ENCODE measurements at regions of chr3 and their contacts with region 1.

Region 1: DNA sequence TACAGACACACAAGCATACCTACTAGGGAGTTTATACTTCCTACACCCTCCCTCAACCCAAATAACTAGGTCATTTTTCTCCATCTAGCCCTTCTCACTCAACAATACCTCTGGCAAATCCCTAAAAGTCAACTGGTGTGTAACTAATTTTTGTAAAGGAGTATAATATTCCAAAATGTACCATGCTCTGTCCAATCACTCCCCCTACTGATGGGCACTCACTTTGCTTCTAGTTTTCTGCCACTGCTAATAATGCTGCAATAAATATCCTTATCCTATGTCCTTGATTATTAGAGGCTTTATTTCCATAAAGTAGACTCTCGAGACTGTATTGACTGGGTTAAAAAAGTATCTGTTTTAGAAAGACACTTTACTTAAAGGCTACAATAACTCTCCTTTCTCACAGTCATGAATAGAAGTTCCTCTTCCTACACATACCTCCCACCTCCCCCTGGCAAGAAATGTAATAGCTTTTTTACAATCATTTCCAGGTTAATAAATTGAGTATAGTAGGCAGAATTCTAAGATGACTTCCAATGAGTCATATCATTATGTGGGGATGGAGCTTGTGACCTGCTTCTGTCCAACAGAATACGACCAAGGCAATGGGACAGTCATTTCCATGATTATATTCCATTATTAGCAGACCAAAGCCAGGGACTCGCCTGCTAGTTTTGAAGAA is 30.0 kb downstream of the SHQ1 start:
- DNase-seq: no peak
- H3K4me3 Mint-ChIP-seq: no peak overlapping the region
- H3K27ac Mint-ChIP-seq: peak overlapping the region; percentile 18
- H3K4me1 Mint-ChIP-seq: peaks cover 22% of the 10 kb centered on the region
- H3K27me3 Mint-ChIP-seq: no peaks in the 10 kb centered on the region

Region 2: GRCh38 chr3:71725279-71725991 is 1092.8 kb before region 1 on chr3 and contains the start of gene EIF4E3:
- intact Hi-C with region 1: loop called (anchors 1 kb)
- DNase-seq: peak; percentile 84
- H3K4me3 Mint-ChIP-seq: peak within 1 kb of the TSS; percentile 96
- H3K27ac Mint-ChIP-seq: peak within 1 kb of the TSS; percentile 94
- H3K4me1 Mint-ChIP-seq: peaks cover 71% of the 10 kb centered on the region
- H3K27me3 Mint-ChIP-seq: no peaks in the 10 kb centered on the region
- total RNA-seq, gene EIF4E3: 20.3 and 20.7 TPM in 2 replicates

Region 3: DNA sequence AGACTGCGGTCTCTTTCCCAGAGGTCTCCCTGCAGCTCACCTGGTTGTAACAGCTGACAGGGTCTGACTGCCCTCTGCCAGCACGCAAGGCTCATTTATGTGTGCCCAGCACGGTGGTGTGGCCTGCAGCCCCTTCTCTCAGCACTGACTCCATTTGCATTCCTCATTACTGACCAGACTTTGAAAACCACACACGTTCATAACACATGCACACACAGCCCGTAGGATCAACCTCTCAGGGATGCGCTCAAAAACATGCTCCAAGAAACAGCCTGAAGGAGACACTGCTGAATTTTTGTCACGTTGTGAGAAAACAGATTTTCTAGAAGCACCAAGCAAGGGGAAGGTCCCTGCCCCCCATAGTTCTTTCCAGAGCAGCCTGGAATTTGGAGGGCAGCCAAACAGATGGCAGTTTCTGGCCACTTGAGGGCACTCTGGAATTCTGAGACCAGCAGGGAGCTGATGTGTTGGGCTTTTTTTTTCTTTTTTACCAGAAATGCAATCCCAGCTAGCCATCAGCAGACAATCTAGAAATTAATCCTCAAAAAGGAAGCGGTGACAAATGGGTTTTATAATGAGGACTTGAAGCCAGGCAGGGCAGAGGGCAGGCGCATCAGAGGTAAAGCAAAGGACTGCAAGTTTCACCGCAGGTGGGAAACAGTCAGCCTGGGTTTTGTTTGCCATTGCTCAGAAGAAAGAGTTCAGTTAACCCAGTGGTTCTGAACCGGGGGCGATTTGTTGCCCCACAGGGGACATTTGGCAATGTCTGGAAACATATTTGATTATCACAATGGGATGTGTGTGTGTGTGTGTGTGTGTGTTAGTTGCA is 862.8 kb before region 1 on chr3:
- intact Hi-C with region 1: loop called (anchors 10 kb)
- DNase-seq: peak; percentile 65
- H3K4me3 Mint-ChIP-seq: no peak overlapping the region
- H3K27ac Mint-ChIP-seq: peak overlapping the region; percentile 39
- H3K4me1 Mint-ChIP-seq: peaks cover 31% of the 10 kb centered on the region
- H3K27me3 Mint-ChIP-seq: no peaks in the 10 kb centered on the region

Region 4: GRCh38 chr3:72339116-72340030 is 478.9 kb before region 1 on chr3:
- intact Hi-C with region 1: loop called (anchors 1 kb)
- DNase-seq: no peak
- H3K4me3 Mint-ChIP-seq: no peak overlapping the region
- H3K27ac Mint-ChIP-seq: no peak overlapping the region
- H3K4me1 Mint-ChIP-seq: peaks cover 32% of the 10 kb centered on the region
- H3K27me3 Mint-ChIP-seq: no peaks in the 10 kb centered on the region

Region 5: GRCh38 chr3:72447059-72447946 is 370.9 kb before region 1 on chr3:
- intact Hi-C with region 1: loop called (anchors 2 kb)
- DNase-seq: peak; percentile 99
- H3K4me3 Mint-ChIP-seq: peak overlapping the region; percentile 92
- H3K27ac Mint-ChIP-seq: peak overlapping the region; percentile 86
- H3K4me1 Mint-ChIP-seq: peaks cover 46% of the 10 kb centered on the region
- H3K27me3 Mint-ChIP-seq: peaks cover 4% of the 10 kb centered on the region

Region 6: GRCh38 chr3:72629191-72629631 is 189.0 kb before region 1 on chr3:
- intact Hi-C with region 1: loop called (anchors 2 kb)
- DNase-seq: peak; percentile 60
- H3K4me3 Mint-ChIP-seq: peak overlapping the region; percentile 37
- H3K27ac Mint-ChIP-seq: peak overlapping the region; percentile 78
- H3K4me1 Mint-ChIP-seq: peaks cover 48% of the 10 kb centered on the region
- H3K27me3 Mint-ChIP-seq: no peaks in the 10 kb centered on the region

Region 7: DNA sequence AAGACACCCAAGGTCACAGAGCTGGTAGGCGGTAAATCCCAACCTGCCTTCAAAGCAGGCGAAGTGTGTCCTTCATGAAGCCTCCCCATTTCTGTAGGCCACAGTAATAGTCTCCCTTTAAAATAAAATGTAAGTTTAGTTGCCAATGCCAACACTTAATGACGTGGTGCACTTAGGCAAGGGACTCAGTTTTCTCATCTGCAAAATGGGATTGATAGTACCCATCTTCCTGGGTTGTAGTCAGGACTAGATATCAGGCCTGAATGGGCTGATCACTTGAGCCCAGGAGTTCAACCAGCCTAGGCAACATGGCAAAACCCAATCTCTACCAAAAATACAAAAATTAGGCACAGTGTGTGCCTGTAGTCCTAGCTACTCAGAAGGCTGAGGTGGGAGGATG is 84.6 kb before region 1 on chr3:
- intact Hi-C with region 1: no loop called
- DNase-seq: no peak
- H3K4me3 Mint-ChIP-seq: no peak overlapping the region
- H3K27ac Mint-ChIP-seq: no peak overlapping the region
- H3K4me1 Mint-ChIP-seq: peaks cover 4% of the 10 kb centered on the region
- H3K27me3 Mint-ChIP-seq: no peaks in the 10 kb centered on the region

Region 8: DNA sequence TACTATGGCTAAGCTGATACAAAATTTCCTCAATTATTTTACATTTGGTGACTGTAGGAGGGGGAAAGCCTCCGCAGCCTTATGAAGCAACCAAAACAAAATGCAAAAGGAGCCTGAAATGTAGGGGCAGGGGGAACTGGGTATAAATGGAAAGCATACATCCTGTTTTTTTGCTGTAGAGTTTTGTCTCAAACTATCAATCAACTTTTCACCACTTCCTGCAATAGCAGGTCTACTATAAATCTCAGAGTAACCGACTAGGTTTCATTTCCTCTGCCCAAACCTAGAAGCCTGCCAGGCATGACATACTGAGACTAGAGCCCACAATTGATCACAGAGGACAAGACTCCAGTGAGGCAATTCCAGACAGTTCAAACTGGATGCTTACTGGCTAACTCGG is 61.3 kb before region 1 on chr3:
- intact Hi-C with region 1: loop called (anchors 5 kb)
- DNase-seq: peak; percentile 87
- H3K4me3 Mint-ChIP-seq: peak overlapping the region; percentile 60
- H3K27ac Mint-ChIP-seq: peak overlapping the region; percentile 81
- H3K4me1 Mint-ChIP-seq: peaks cover 39% of the 10 kb centered on the region
- H3K27me3 Mint-ChIP-seq: no peaks in the 10 kb centered on the region

Region 9: DNA sequence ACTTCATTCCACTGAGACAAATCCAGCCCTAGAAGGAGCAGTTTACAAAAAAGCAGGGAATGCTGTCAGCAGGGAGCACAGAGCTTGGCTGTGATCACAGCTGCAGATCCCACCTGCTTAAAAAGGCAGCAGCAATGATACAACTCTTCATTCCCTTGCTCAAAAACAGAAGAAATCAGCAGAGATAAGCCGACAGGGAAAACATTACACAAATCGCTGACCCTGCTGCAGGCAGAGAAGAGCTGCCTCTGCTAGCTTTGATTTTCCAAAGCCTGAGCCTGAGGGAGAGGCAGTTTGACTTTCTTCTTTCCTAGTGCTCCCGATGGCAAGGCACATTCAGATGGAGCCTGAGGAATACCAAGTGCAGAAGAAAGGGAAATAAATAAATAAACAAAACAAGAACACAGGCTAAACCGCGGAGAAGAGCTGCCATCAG is 50.2 kb before region 1 on chr3:
- intact Hi-C with region 1: no loop called
- DNase-seq: no peak
- H3K4me3 Mint-ChIP-seq: no peak overlapping the region
- H3K27ac Mint-ChIP-seq: no peak overlapping the region
- H3K4me1 Mint-ChIP-seq: peaks cover 4% of the 10 kb centered on the region
- H3K27me3 Mint-ChIP-seq: no peaks in the 10 kb centered on the region

Region 10: DNA sequence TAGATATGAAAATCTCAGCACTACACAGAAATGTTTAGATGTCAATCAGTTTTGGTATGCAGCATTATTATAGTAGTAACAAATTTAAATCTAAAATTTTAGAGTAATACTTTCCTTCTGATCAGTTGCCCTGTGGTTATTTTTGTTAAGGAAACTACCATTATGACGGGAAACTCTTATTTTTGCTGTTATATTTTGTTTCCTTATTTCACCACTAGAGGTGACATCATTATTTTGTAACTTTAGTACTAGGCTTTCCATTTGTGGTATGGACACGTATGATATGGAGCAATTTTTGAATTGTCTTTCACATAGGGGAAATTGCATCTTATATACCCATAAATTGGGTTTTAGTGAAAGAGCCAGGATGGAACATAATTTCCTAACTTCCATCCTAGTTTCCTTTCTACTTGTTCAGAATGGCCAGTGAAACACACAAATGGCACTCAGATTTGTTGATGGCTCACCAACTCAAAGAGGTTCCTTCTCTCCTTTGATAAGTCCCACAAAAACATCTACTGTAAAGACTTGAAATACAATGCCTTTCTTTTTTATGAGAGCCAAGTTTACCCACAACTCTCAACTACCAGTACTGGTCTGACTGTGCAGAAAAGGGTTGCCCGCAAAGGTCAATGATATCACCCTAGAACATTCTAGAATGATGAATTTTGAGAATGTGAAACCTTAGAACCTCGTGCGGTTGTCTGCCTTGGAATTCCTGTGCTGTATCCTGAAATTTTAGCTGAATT is 159.0 kb after region 1 on chr3:
- intact Hi-C with region 1: no loop called
- DNase-seq: no peak
- H3K4me3 Mint-ChIP-seq: no peak overlapping the region
- H3K27ac Mint-ChIP-seq: peak overlapping the region; percentile 85
- H3K4me1 Mint-ChIP-seq: peaks cover 8% of the 10 kb centered on the region
- H3K27me3 Mint-ChIP-seq: peaks cover 8% of the 10 kb centered on the region

Measured in activated CD4-positive, alpha-beta T cell treated with anti-CD3 and anti-CD28 coated beads, Interleukin-2, amount 10 ng/mL, durations not matched to agents 24 days and 14 days (primary cell).